CD4-positive, alpha-beta memory T cell (primary cell): ENCODE measurements at regions of chr19 and their contacts with region 1.

Region 1: DNA sequence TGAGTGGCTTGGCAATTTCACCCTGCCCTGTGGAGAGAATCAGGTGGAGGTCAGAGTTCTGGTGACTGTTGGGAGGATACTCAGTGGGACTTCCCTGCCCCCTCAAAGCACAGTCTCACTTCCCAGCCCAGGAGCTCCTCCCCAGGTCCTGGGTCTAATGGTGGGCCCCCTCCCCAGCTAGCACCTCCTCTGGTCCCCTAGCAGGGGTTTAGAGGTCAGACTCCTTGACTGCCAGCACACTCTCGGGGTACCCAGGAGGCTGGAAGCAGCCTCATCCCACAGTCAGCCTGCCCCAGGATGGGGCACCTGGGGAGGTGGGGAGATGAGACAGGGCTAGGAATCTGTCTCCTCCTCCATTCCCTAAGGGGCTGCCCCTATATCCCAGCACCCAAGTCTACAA is 65.2 kb downstream of the COLGALT1 start:
- DNase-seq: no peak
- H3K4me3 ChIP-seq: no peak overlapping the region
- H3K4me3 Mint-ChIP-seq: no peak overlapping the region
- H3K27ac ChIP-seq: no peak overlapping the region
- H3K27ac Mint-ChIP-seq: no peak overlapping the region
- H3K4me1 ChIP-seq: peaks cover 6% of the 10 kb centered on the region
- H3K4me1 Mint-ChIP-seq: peaks cover 7 to 11% (median 10%) of the 10 kb centered on the region in 4 donors
- H3K27me3 ChIP-seq: peaks cover 5% of the 10 kb centered on the region
- H3K27me3 Mint-ChIP-seq: peaks cover 15 to 31% of the 10 kb centered on the region in 2 donors

Region 2: DNA sequence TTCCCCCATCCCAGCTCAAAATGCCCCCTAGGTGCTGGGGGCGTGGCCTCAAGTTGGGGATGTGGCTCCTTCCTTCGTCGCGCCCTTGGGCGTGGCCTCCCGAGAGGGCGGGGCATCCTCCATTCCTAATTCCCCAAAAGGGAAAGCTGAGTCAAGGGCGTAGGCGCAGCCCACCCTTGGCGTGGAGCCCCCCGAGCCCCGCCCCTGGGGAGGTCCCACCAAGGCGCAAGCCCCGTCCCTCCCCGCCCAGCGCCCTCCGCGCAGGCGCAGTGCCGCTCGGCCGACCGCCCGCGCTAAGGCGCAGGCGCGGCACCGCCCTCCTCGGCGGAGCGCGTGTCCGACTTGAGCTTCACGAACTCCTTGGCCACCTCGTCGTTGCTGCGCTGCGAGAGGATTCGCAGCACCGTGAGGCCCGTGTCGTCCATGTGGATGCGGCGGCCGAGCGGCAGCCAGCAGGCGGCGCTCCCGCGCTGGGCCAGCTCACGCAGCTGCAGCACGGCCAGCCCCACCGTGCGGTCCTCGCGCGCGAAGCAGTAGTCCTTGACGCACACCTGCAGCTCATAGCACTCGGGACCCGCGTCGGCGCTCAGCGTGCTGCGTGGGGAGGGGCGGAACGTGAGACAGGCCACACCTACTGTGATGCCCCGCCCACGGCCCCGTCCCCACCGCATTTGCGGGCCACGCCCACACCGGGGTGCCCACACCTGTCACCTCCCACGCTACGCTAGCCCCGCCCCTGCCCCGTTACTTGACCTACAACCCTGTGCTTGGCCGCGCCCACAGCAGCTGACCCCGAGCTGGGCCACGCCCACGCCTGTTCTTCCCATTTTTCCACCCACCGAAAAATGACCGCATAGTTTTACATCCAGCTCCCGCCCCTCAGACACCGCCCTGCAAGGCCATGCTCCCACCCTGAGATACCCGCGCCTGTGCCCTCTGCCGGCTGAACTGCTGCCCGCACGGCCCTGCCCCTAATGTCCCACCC is 14.6 kb before region 1 on chr19:
- CTCF ChIA-PET with region 1: interaction called, 11 read pairs
- POLR2A ChIA-PET with region 1: interaction called, 6 read pairs
- intact Hi-C with region 1: no loop called
- DNase-seq: peak; percentile 82 to 93 (median 87)
- H3K4me3 ChIP-seq: peak overlapping the region; percentile 17 to 54
- H3K4me3 Mint-ChIP-seq: peak overlapping the region; percentile 72 to 84 (median 81)
- H3K27ac ChIP-seq: peak overlapping the region; percentile 17
- H3K27ac Mint-ChIP-seq: peak overlapping the region; percentile 72 to 91 (median 82)
- H3K4me1 ChIP-seq: peaks cover 13% of the 10 kb centered on the region
- H3K4me1 Mint-ChIP-seq: peaks cover 7 to 11% (median 9%) of the 10 kb centered on the region in 4 donors
- H3K27me3 ChIP-seq: peaks cover 8% of the 10 kb centered on the region
- H3K27me3 Mint-ChIP-seq: peaks cover 25 to 35% of the 10 kb centered on the region in 2 donors